ENCODE measurements at regions of chr17 and their contacts with region 1.

Region 1: DNA sequence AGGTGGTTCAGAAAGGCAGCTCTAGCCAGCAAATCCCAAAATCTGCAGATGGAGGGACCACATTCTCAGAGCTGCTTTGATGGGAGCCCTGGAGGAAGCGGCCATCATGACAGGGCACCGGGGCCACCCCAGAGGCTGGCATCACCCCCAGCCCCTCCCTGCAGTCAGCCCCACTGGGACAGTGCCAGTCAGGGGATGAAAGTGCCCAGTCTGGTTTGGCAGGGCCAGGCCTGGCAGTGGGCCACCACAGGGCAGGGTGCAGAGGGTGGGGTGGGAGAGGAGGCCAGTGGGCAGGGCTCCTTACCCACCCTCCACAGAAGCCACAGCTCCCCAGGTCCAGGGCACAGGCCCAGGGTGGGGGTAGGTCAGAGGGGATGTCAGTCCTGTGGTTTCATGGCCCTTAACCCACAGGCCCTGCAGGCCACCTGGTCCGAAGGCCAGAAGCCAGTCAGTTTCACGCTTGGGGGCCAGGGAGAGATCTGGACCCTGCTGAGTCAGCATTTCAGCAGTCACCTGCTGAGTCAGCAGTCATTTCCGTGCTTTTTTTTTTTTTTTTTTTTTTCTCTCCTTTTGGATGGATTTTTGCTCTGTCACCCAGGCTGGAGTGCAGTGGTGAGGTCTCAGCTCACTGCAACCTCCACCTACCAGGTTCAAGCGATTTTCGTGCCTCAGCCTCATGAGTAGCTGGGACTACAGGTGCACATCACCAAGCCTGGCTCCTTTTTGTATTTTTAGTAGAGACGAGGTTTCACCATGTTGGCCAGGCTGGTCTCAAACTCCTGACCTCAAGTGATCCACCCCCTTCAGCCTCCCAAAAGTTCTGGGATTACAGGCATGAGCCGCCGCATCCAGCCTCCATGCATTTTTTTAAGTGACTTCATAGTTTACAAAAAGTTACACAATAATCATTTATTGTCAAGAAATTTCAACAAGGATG is 10.4 kb downstream of the SLC25A10 start:
- DNase-seq: no peak
- H3K4me3 ChIP-seq: no peak overlapping the region
- H3K4me3 Mint-ChIP-seq: no peak overlapping the region
- H3K27ac Mint-ChIP-seq: no peak overlapping the region
- H3K4me1 ChIP-seq: peaks cover 4% of the 10 kb centered on the region; the same call in 1 of the 2 replicates
- H3K4me1 Mint-ChIP-seq: no peaks in the 10 kb centered on the region
- H3K27me3 ChIP-seq: no peaks in the 10 kb centered on the region
- H3K27me3 Mint-ChIP-seq: no peaks in the 10 kb centered on the region
- CTCF ChIP-seq: no peak

Region 2: DNA sequence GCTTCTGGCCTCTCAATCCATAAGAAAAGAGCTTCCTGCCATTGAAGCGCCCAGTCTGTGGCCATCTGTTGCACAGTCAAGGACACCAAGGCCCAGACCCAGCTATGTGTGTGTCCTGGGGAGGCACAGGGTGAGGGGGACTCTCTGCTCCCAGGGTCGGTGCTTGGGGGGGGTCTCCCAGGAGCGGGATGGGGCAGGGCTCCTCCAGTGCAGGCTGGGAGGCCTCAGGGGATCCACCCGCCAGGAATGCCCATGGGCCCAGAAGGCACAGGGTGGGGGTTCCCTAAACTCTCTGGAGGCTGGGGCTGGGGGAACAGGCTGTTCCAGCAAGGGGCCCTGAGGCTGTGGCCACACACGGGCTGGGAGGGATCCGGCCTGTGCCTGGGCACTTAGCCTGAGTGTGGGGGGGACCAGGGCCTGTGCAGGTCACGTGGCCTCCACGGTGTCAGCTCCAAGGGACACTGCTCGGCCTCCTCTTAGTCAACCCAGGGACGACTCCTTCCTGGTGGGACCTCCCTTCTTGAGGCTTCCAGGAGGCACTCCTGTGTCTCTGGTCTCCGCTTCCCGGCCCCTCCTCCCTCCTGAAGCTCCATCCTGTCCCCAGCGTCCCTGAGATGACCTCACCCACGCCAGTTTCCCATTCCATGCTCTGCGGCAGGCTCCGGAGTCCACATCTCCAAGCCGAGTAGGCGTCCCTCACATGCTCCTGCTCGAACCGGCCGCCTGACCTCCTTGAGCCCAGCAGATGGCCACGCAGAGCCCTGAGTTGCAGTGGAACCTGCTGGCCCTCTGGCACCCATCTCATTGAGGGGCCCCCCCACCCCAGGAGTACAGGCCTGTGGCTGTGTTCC is 350.3 kb before region 1 on chr17:
- CTCF ChIA-PET with region 1: no interaction called
- POLR2A ChIA-PET with region 1: no interaction called
- intact Hi-C with region 1: no loop called
- DNase-seq: peak; percentile 75 to 79
- H3K4me3 ChIP-seq: no peak overlapping the region
- H3K4me3 Mint-ChIP-seq: no peak overlapping the region
- H3K27ac Mint-ChIP-seq: peak overlapping the region; percentile 58
- H3K4me1 ChIP-seq: peaks cover 12% of the 10 kb centered on the region
- H3K4me1 Mint-ChIP-seq: peaks cover 8% of the 10 kb centered on the region
- H3K27me3 ChIP-seq: no peaks in the 10 kb centered on the region
- H3K27me3 Mint-ChIP-seq: no peaks in the 10 kb centered on the region
- CTCF ChIP-seq: peak; percentile 67 to 75

Region 3: GRCh38 chr17:81612172-81612970 is 110.1 kb before region 1 on chr17:
- CTCF ChIA-PET with region 1: no interaction called
- POLR2A ChIA-PET with region 1: no interaction called
- intact Hi-C with region 1: no loop called
- DNase-seq: no peak
- H3K4me3 ChIP-seq: no peak overlapping the region
- H3K4me3 Mint-ChIP-seq: no peak overlapping the region
- H3K27ac Mint-ChIP-seq: no peak overlapping the region
- H3K4me1 ChIP-seq: no peaks in the 10 kb centered on the region
- H3K4me1 Mint-ChIP-seq: no peaks in the 10 kb centered on the region
- H3K27me3 ChIP-seq: no peaks in the 10 kb centered on the region
- H3K27me3 Mint-ChIP-seq: no peaks in the 10 kb centered on the region
- CTCF ChIP-seq: no peak

Region 4: GRCh38 chr17:81711814-81712467 is 10.5 kb before region 1 on chr17 and contains the start of gene SLC25A10:
- CTCF ChIA-PET with region 1: no interaction called
- POLR2A ChIA-PET with region 1: interaction called, 10 read pairs
- intact Hi-C with region 1: no loop called
- DNase-seq: peak; percentile 92 to 95
- H3K4me3 ChIP-seq: peak within 1 kb of the TSS; percentile 65
- H3K4me3 Mint-ChIP-seq: peak within 1 kb of the TSS; percentile 98
- H3K27ac Mint-ChIP-seq: peak within 1 kb of the TSS; percentile 91
- H3K4me1 ChIP-seq: peaks cover 31% of the 10 kb centered on the region
- H3K4me1 Mint-ChIP-seq: peaks cover 9% of the 10 kb centered on the region
- H3K27me3 ChIP-seq: no peaks in the 10 kb centered on the region
- H3K27me3 Mint-ChIP-seq: no peaks in the 10 kb centered on the region
- CTCF ChIP-seq: no peak
- total RNA-seq, gene SLC25A10: 49.5 and 54.8 TPM in 2 replicates

Region 5: DNA sequence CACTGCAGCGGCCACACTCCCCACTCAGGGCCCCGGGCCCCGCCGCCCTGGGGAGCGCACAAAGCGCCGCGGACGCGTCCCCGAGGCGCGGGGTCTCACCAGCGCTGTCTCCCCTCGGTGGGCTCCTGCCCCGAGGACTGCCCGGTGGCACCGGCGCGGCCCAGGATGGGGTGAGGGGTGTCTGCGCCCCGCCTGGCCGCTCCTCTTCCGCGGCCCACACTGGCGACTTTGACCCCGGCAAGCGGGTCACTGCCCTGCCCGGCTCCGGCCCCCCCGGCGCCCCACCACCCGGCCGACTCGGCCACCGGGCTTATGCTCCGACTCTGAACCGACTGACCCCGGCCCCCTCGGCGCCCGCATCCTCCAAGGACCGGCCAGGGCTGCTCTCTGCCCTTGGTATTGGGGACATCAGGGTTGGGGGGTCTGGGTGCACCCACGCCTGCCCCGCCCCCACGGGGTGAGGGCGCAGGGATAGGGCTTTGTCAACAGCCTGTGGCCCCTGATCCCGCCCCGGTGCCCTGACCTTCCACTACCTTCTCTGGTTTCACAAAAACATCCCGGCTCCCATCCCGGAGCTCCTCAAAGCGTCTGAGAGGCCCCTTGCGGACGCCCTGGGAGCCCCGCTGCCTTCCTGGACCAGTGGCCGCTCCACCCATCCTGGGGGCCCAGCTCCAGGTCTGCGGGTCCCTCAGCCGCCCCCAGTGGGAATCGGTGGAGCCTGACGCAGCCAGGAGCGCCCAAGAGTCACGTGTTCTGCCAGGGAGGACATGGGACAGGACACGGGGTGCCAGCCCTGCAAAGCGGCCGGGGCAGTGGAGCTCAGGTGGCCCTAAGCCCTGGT is 82.3 kb after region 1 on chr17:
- CTCF ChIA-PET with region 1: no interaction called
- POLR2A ChIA-PET with region 1: interaction called, 10 read pairs
- intact Hi-C with region 1: no loop called
- DNase-seq: no peak
- H3K4me3 ChIP-seq: peak overlapping the region; percentile 32
- H3K4me3 Mint-ChIP-seq: peak overlapping the region; percentile 55
- H3K27ac Mint-ChIP-seq: no peak overlapping the region
- H3K4me1 ChIP-seq: peaks cover 14% of the 10 kb centered on the region
- H3K4me1 Mint-ChIP-seq: peaks cover 11% of the 10 kb centered on the region
- H3K27me3 ChIP-seq: no peaks in the 10 kb centered on the region
- H3K27me3 Mint-ChIP-seq: peaks cover 24% of the 10 kb centered on the region
- CTCF ChIP-seq: no peak

Region 6: GRCh38 chr17:81814748-81815645 is 92.5 kb after region 1 on chr17:
- CTCF ChIA-PET with region 1: no interaction called
- POLR2A ChIA-PET with region 1: no interaction called
- intact Hi-C with region 1: no loop called
- DNase-seq: peak; percentile 69 to 77
- H3K4me3 ChIP-seq: no peak overlapping the region
- H3K4me3 Mint-ChIP-seq: no peak overlapping the region
- H3K27ac Mint-ChIP-seq: no peak overlapping the region
- H3K4me1 ChIP-seq: peaks cover 9% of the 10 kb centered on the region
- H3K4me1 Mint-ChIP-seq: peaks cover 6% of the 10 kb centered on the region
- H3K27me3 ChIP-seq: no peaks in the 10 kb centered on the region
- H3K27me3 Mint-ChIP-seq: no peaks in the 10 kb centered on the region
- CTCF ChIP-seq: no peak

Region 7: GRCh38 chr17:82003411-82004381 is 281.2 kb after region 1 on chr17:
- CTCF ChIA-PET with region 1: no interaction called
- POLR2A ChIA-PET with region 1: no interaction called
- intact Hi-C with region 1: no loop called
- DNase-seq: peak; percentile 71 to 80
- H3K4me3 ChIP-seq: no peak overlapping the region
- H3K4me3 Mint-ChIP-seq: no peak overlapping the region
- H3K27ac Mint-ChIP-seq: no peak overlapping the region
- H3K4me1 ChIP-seq: peaks cover 19% of the 10 kb centered on the region
- H3K4me1 Mint-ChIP-seq: no peaks in the 10 kb centered on the region
- H3K27me3 ChIP-seq: no peaks in the 10 kb centered on the region
- H3K27me3 Mint-ChIP-seq: no peaks in the 10 kb centered on the region
- CTCF ChIP-seq: no peak

Measured in Caco-2 (cell line).